CD8-positive, alpha-beta T cell (primary cell): ENCODE measurements at regions of chr7 and their contacts with region 1.

Region 1: DNA sequence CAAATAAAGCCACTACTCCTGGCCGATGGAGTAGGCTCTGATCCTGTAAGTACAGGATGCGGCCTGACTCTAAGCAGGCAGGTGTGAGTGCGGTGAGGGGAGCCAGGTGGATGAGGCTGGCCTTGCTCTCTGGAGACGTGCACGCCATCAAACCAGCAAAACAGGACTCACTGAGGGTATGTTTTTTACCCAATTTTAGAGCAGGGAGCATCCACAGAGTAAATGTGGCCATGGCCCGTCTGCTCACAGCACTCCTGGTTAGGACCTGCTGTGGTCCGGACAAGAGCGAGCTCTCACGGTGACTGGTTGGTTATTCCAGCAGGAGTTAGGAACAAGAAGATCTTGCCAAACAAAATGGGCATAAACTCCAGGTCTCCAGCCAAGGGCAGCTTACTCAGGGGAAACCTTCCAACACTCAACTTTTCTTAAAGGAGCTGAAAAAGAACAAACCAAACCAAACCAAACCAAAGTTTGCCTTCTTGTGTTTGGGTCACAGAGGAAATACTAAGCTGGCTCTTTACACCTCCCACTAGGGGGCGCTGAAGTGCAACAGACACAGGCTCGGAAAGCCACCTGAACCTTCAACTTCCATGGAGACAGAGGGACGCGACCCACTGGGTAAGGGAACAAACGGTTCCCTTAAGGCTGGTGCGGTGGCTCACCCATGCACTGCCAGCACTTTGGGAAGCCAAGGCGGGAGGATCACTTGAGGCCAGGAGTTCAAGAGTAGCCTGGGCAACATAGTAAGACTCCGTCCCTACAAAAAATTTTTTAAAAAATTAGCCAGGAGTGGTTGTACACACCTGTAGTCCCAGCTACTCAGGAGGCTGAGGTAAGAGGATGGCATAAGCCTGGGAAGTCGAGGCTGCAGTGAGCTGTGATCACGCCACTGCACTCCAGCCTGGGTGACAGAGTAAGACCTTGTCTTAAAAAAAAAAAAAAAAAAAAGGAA is 122.4 kb downstream of the CLEC2L start:
- DNase-seq: peak; percentile 64 to 90 (median 84)
- ATAC-seq: peak; percentile 52
- H3K4me3 ChIP-seq: no peak overlapping the region
- H3K4me3 Mint-ChIP-seq: no peak overlapping the region
- H3K27ac ChIP-seq: no peak overlapping the region
- H3K27ac Mint-ChIP-seq: peak overlapping the region; percentile 79
- H3K4me1 ChIP-seq: peaks cover 55% of the 10 kb centered on the region
- H3K4me1 Mint-ChIP-seq: peaks cover 76% of the 10 kb centered on the region
- H3K27me3 ChIP-seq: no peaks in the 10 kb centered on the region
- H3K27me3 Mint-ChIP-seq: no peaks in the 10 kb centered on the region
- CTCF ChIP-seq: peak; percentile 82

Region 2: GRCh38 chr7:139557857-139558581 is 87.8 kb before region 1 on chr7:
- CTCF ChIA-PET with region 1: no interaction called
- POLR2A ChIA-PET with region 1: no interaction called
- intact Hi-C with region 1: no loop called
- DNase-seq: no peak
- ATAC-seq: no peak
- H3K4me3 ChIP-seq: no peak overlapping the region
- H3K4me3 Mint-ChIP-seq: no peak overlapping the region
- H3K27ac ChIP-seq: no peak overlapping the region
- H3K27ac Mint-ChIP-seq: no peak overlapping the region
- H3K4me1 ChIP-seq: no peaks in the 10 kb centered on the region
- H3K4me1 Mint-ChIP-seq: peaks cover 2% of the 10 kb centered on the region
- H3K27me3 ChIP-seq: no peaks in the 10 kb centered on the region
- H3K27me3 Mint-ChIP-seq: peaks cover 11% of the 10 kb centered on the region
- CTCF ChIP-seq: no peak

Region 3: DNA sequence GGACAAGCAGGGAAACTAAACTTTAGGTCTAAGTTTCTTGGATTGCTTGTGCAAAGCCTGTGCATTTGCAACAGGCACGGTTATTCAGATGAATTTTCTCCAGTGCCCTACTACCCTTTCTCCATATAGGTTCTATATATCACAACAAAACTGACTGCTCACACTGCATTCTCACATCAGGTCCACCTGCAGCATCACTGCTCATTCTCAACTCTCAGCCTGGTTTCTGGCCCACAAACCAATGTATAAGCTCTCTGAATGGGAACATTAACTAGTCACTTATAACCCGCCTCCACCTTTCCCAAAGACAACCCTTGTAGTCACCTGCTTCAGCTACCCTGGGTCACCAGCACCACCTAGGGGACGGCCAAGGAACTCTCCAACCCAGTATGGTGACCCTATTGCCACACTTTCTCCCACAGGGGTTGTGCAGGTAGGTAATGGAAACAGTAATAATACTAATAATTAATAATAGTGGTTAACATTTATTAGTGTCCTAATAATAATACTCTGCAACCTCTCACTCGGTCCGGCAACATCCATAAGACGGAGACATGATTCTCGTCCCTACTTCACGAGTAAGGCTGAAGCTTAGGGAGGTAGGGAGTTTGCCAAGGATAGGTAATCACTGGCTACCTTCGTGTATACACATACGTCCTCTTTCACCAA is 25.0 kb before region 1 on chr7:
- CTCF ChIA-PET with region 1: interaction called, 53 read pairs
- POLR2A ChIA-PET with region 1: no interaction called
- intact Hi-C with region 1: no loop called
- DNase-seq: peak in 8 of 9 experiments; percentile 24 to 69 (median 52)
- ATAC-seq: peak; percentile 87
- H3K4me3 ChIP-seq: no peak overlapping the region
- H3K4me3 Mint-ChIP-seq: no peak overlapping the region
- H3K27ac ChIP-seq: no peak overlapping the region
- H3K27ac Mint-ChIP-seq: peak overlapping the region; percentile 3
- H3K4me1 ChIP-seq: peaks cover 9% of the 10 kb centered on the region
- H3K4me1 Mint-ChIP-seq: peaks cover 27% of the 10 kb centered on the region
- H3K27me3 ChIP-seq: no peaks in the 10 kb centered on the region
- H3K27me3 Mint-ChIP-seq: no peaks in the 10 kb centered on the region
- CTCF ChIP-seq: peak; percentile 65

Region 4: DNA sequence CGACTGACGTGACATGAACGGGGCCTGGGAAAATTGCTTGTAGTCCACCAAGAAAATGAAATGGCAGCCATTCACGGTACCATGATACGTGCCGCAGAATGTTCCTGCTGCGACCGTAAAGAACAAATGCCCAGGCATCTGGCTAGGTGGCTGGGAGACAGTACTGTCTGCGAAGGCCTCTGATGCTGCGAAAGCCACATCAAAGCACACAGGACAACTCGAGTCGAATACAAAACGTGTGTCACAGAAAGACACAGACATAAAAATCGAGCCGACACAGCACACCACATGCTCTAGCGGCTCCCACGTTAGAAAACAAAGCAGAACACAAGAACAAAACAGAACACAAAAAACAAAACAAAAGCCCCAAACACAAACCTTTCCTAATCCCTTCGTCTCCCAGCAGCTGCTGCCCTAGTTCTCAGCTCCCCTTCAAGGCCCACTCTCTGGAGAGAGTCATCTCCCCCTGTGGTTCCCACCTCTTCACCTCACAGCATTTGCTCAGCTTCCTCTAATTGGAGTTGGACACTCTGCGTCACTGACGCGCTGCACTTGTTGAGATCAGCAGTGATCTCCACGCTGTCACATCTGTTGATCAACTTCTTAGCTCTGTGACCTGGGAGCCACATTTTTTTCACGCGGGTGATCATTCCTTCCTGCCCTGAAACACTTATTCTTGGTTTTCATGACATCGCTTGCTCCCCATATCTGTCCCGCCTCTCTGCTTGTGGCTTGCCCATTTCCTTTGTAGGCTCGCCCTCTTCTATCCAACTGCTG is 10.1 kb before region 1 on chr7:
- CTCF ChIA-PET with region 1: interaction called, 53 read pairs
- POLR2A ChIA-PET with region 1: interaction called, 4 read pairs
- intact Hi-C with region 1: no loop called
- DNase-seq: peak; percentile 41 to 91 (median 68)
- ATAC-seq: peak; percentile 93
- H3K4me3 ChIP-seq: peak overlapping the region in 1 of 2 experiments; percentile 7
- H3K4me3 Mint-ChIP-seq: peak overlapping the region; percentile 61
- H3K27ac ChIP-seq: peak overlapping the region; percentile 47 to 57
- H3K27ac Mint-ChIP-seq: peak overlapping the region; percentile 97
- H3K4me1 ChIP-seq: peaks cover 38% of the 10 kb centered on the region
- H3K4me1 Mint-ChIP-seq: peaks cover 63% of the 10 kb centered on the region
- H3K27me3 ChIP-seq: no peaks in the 10 kb centered on the region
- H3K27me3 Mint-ChIP-seq: no peaks in the 10 kb centered on the region
- CTCF ChIP-seq: no peak

Region 5: DNA sequence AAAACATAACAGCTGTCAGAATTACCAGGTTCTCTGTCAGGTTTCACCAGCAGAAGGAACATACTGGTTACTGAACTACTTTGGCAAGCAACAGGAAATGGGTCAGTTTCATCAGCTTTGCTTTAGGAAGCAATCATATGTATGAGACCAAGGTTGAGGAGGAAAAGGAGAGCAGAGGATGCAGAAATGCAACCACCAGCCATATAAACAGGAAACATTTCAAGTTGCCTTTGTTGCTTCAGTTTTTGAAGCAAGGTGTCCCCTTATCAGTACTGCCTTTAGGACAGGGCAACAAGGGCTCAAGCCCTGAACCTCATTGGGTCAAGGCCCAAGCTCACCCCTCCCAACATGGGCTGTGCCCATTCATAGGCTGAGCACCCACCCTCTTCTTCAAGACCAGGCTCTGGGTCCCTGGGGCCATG is 121.7 kb after region 1 on chr7:
- CTCF ChIA-PET with region 1: interaction called, 14 read pairs
- POLR2A ChIA-PET with region 1: no interaction called
- intact Hi-C with region 1: no loop called
- DNase-seq: peak in 3 of 9 experiments; percentile 36 to 55 (median 55)
- ATAC-seq: peak; percentile 74
- H3K4me3 ChIP-seq: peak overlapping the region in 1 of 2 experiments; percentile 26
- H3K4me3 Mint-ChIP-seq: peak overlapping the region; percentile 59
- H3K27ac ChIP-seq: peak overlapping the region; percentile 59 to 74
- H3K27ac Mint-ChIP-seq: peak overlapping the region; percentile 91
- H3K4me1 ChIP-seq: peaks cover 33% of the 10 kb centered on the region
- H3K4me1 Mint-ChIP-seq: peaks cover 86% of the 10 kb centered on the region
- H3K27me3 ChIP-seq: no peaks in the 10 kb centered on the region
- H3K27me3 Mint-ChIP-seq: no peaks in the 10 kb centered on the region
- CTCF ChIP-seq: no peak

Region 6: DNA sequence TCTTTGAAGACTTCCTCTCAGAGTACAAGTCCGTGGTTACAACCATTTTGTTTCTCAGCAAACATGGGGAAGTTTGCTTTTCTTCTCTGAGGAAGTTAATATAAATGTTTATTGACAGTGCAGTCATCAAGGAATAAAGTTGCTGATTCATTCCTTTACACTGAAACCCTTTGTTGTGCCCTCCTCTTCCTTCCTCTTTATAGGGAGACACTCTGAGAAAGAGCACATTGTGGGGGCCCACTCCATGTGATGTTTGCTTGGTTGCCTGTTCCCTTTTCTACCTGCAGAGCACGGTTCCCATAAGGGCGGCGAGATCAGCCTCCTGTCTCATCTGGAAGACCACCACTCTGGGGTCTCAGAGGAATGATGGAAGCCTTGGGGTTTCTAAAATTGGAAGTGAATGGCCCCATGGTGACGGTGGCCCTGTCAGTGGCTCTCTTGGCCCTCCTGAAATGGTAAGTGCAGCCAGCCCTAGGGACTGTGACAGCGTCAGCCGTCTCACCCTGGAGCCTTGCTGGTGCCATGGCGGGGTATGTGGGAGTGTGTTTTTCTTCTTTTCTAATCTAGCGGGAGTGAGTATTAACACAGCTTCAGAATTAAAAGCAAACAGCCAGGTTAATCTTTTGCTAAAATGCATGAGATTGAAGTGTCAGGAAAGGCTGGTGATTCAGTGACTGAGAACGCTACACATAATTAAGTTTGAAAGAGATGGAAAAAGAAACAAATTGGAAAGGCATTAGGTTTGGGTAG is 183.4 kb after region 1 on chr7 and contains the start of gene TBXAS1:
- CTCF ChIA-PET with region 1: interaction called, 25 read pairs
- POLR2A ChIA-PET with region 1: no interaction called
- intact Hi-C with region 1: loop called (anchors 1 to 2 kb)
- DNase-seq: peak in 1 of 9 experiments; percentile 20
- ATAC-seq: no peak
- H3K4me3 ChIP-seq: no peak within 1 kb of the TSS
- H3K4me3 Mint-ChIP-seq: peak within 1 kb of the TSS; percentile 59
- H3K27ac ChIP-seq: peak within 1 kb of the TSS in 1 of 2 experiments; percentile 48
- H3K27ac Mint-ChIP-seq: peak within 1 kb of the TSS; percentile 76
- H3K4me1 ChIP-seq: no peaks in the 10 kb centered on the region
- H3K4me1 Mint-ChIP-seq: peaks cover 20% of the 10 kb centered on the region
- H3K27me3 ChIP-seq: no peaks in the 10 kb centered on the region
- H3K27me3 Mint-ChIP-seq: peaks cover 3% of the 10 kb centered on the region
- CTCF ChIP-seq: no peak
- total RNA-seq, gene TBXAS1: 0.43 to 0.97 TPM

Region 7: GRCh38 chr7:140326116-140326928 is 680.5 kb after region 1 on chr7:
- CTCF ChIA-PET with region 1: no interaction called
- POLR2A ChIA-PET with region 1: no interaction called
- intact Hi-C with region 1: loop called (anchors 10 kb)
- DNase-seq: peak; percentile 13 to 66 (median 50)
- ATAC-seq: peak; percentile 79
- H3K4me3 ChIP-seq: no peak overlapping the region
- H3K4me3 Mint-ChIP-seq: no peak overlapping the region
- H3K27ac ChIP-seq: no peak overlapping the region
- H3K27ac Mint-ChIP-seq: no peak overlapping the region
- H3K4me1 ChIP-seq: peaks cover 8% of the 10 kb centered on the region
- H3K4me1 Mint-ChIP-seq: no peaks in the 10 kb centered on the region
- H3K27me3 ChIP-seq: no peaks in the 10 kb centered on the region
- H3K27me3 Mint-ChIP-seq: no peaks in the 10 kb centered on the region
- CTCF ChIP-seq: peak; percentile 57